Sigmoid colon (tissue), 7 donors: ENCODE measurements at regions of chr1 and their contacts with region 1.

Region 1: GRCh38 chr1:230642263-230642959 is at the start of gene COG2:
- DNase-seq: peak; percentile 96
- H3K4me3 ChIP-seq: peak within 1 kb of the TSS; percentile 64 to 91 (median 75)
- H3K27ac ChIP-seq: peak within 1 kb of the TSS; percentile 80 to 86 (median 82)
- H3K4me1 ChIP-seq: peaks cover 0 to 31% (median 24%) of the 10 kb centered on the region in 4 donors
- H3K27me3 ChIP-seq: peaks cover 0 to 4% (median 0%) of the 10 kb centered on the region in 3 donors
- CTCF ChIP-seq: peak; percentile 92 to 100 (median 96)
- EP300 ChIP-seq: no peak
- POLR2A ChIP-seq: peak in 1 of 2 donors; percentile 50
- total RNA-seq, gene COG2: 17.6 to 26.4 (median 25.0) TPM

Region 2: DNA sequence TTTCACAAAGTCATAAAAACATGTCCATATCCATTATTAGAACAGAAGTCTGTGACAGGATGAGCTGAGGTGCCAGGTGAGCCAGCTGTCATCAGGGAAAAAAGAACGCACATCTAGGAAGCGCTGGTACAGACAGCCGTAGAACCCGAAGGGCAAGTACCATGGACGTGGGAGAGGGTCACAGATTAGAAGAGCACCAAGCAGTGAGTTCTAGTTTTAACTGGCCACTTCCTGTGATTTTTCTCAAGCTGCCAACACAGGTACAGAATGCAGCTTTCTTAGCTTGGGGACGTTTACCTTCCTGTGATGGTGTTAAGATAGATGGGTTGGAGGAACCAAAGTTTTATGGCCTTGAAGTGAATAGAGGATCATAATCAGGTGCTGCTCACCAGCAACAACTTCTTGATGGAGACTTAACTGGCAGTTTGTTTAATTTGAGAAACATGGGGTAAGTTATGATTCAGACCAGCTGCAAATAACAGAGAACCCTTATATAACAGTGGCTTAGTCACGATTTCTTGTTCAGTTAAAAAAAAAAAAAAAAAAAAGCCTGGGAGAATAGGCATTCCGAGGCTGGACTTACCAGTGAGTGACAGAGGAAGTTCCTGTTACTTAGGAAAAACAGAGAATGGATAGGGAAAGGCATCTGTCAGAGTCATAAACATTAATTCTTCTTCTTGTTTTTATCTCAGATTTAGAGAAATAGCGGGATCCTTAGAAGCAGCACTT is 40.6 kb after region 1 on chr1:
- intact Hi-C with region 1: loop called (anchors 2 kb)
- DNase-seq: no peak
- H3K4me3 ChIP-seq: no peak overlapping the region
- H3K27ac ChIP-seq: peak overlapping the region in 1 of 4 donors; percentile 70
- H3K4me1 ChIP-seq: peaks cover 0 to 26% (median 12%) of the 10 kb centered on the region in 4 donors
- H3K27me3 ChIP-seq: no peaks in the 10 kb centered on the region
- CTCF ChIP-seq: no peak
- EP300 ChIP-seq: no peak
- POLR2A ChIP-seq: no peak

Region 3: DNA sequence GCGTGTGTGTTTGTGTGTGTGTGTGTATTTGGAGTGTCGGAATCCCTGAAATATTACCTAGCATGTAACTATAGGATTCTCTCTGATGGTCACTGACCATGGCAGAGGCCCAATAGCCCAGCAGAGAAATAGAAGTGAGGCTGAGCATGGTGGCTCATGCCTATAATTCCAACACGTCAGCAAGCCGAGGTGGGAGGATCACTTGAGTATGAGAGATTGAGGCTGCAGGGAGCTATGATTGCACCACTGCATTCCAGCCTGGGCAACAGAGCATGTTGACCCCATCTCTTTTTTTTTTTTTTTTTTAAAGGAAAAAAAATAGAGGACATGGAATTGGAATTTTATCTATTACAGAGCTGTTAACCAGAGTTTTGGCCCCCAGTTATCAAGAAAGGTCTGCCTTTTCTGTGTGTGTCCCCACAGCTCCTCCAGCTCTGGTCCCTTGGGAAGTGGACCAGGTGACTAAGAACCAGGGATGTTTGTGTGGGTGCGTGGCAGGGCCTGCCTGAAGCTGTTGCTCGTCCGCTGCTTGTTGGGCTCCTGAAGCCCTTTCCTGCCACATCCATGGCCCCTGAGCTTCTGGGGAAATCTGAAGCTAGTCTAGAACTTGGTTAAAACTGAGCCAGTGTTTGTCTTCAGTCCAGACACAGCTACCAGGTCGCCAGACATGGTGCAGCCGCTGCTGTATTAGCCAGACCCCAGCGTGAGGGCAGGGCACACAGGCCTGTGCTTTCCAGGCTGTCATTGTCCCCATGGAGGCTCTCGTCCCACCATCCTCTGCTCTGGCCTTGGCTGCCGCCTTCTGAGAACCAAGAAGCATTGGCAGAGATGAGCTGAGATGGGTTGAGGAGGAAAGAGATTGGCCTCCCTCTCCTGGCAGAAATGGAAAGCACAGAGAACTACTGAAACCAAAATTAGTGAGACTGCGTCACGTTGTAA is 130.3 kb after region 1 on chr1:
- intact Hi-C with region 1: loop called (anchors 5 kb)
- DNase-seq: no peak
- H3K4me3 ChIP-seq: no peak overlapping the region
- H3K27ac ChIP-seq: no peak overlapping the region
- H3K4me1 ChIP-seq: no peaks in the 10 kb centered on the region
- H3K27me3 ChIP-seq: no peaks in the 10 kb centered on the region
- CTCF ChIP-seq: peak in 3 of 4 experiments; percentile 27 to 44 (median 38)
- EP300 ChIP-seq: no peak
- POLR2A ChIP-seq: no peak

Region 4: DNA sequence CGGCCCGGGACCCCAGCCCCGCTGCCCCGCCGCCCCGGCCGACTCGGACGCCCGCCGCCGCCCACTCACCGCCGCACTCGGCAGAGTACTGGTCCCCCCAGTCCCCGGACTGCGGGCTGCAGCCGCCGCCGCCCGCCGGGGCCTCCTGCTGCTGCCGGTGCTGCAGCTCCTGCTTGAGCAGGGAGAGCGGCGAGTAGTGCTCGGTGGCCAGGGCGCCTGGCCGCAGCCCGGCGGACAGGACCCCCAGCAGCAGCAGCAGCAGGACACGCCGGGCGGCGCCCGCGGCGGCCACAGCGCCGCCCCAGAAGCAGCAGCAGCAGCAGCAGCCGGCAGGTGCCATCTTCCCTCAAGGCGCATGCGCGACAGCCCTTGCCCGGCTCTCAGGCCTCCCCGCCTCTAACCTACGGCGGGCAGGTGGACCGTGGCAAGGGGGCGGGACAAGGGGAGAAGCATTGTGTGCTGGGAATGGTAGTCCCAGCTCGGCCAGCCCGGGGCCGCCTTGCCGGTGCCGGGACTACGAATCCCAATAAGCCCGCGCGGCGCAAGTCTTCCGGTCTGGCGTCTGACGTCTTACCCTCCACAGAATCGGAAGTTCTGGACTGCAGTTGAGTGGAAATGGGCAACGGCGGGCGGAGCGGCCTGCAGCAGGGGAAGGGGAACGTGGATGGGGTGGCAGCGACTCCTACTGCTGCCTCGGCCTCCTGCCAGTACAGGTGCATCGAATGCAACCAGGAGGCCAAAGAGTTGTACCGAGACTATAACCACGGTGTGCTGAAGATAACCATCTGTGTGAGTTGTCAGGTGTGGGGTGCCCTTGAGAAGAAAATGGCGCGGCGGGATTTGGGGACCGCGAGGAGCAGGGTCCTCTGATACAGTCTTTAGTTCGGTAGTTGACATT is 336.3 kb after region 1 on chr1 and contains the starts of genes ARV1 and TTC13:
- intact Hi-C with region 1: loop called (anchors 2 kb)
- DNase-seq: peak; percentile 98
- H3K4me3 ChIP-seq: peak within 1 kb of the TSS; percentile 65 to 95 (median 90)
- H3K27ac ChIP-seq: peak within 1 kb of the TSS; percentile 71 to 83 (median 80)
- H3K4me1 ChIP-seq: peaks cover 0 to 27% (median 17%) of the 10 kb centered on the region in 4 donors
- H3K27me3 ChIP-seq: no peaks in the 10 kb centered on the region
- CTCF ChIP-seq: no peak
- EP300 ChIP-seq: no peak
- POLR2A ChIP-seq: peak; percentile 25 to 76
- total RNA-seq, gene ARV1: 19.7 to 32.1 (median 22.8) TPM
- total RNA-seq, gene TTC13: 7.3 to 19.7 (median 16.3) TPM